CD4-positive, alpha-beta memory T cell (primary cell): ENCODE measurements at regions of chr2 and their contacts with region 1.

Region 1: GRCh38 chr2:32168513-32168912 is 2.8 kb downstream of the SLC30A6 start:
- DNase-seq: no peak
- H3K4me3 ChIP-seq: no peak overlapping the region
- H3K4me3 Mint-ChIP-seq: peak overlapping the region in 1 of 8 donors; percentile 33
- H3K27ac ChIP-seq: no peak overlapping the region
- H3K27ac Mint-ChIP-seq: peak overlapping the region in 1 of 7 donors; percentile 38
- H3K4me1 ChIP-seq: peaks cover 23% of the 10 kb centered on the region
- H3K4me1 Mint-ChIP-seq: peaks cover 30 to 56% (median 46%) of the 10 kb centered on the region in 4 donors
- H3K27me3 ChIP-seq: no peaks in the 10 kb centered on the region
- H3K27me3 Mint-ChIP-seq: no peaks in the 10 kb centered on the region

Region 2: DNA sequence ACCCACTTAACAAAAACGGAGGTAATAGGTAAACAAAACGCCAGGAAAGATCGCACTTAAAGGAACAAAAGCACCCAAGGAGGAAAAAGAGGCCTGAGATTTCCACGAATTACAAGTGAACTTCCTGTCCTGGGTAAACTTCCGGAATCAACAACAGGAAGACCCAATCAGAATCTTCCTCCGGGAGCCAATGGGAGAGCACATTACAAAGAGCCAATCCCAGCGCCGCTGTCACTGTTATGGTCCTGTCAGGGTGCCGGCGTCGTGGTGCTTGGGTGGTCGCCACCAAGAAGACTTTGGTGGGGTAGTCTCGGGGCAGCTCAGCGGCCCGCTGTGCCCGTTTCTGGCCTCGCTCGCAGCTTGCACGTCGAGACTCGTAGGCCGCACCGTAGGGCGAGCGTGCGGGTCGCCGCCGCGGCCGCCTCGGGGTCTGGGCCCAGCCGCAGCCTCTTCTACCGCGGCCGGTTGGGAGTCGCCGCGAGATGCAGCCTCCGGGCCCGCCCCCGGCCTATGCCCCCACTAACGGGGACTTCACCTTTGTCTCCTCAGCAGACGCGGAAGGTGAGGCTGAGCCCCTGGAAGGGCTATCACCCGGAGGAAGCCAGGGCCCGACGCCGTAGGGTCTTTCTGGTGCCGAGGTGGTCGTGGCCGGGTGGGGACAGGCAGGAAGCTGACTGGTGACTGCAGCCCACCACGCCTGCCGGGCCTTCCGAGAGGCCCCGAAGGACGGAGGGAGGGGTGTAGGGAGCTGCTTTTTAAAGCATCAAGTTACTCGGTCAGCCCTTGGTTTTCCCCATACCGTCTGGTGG is 109.4 kb after region 1 on chr2 and contains the start of gene YIPF4:
- CTCF ChIA-PET with region 1: no interaction called
- POLR2A ChIA-PET with region 1: interaction called, 6 read pairs
- intact Hi-C with region 1: loop called (anchors 1 kb)
- DNase-seq: peak; percentile 88 to 92 (median 90)
- H3K4me3 ChIP-seq: peak within 1 kb of the TSS; percentile 90 to 98
- H3K4me3 Mint-ChIP-seq: peak within 1 kb of the TSS; percentile 90 to 97 (median 96)
- H3K27ac ChIP-seq: peak within 1 kb of the TSS; percentile 72
- H3K27ac Mint-ChIP-seq: peak within 1 kb of the TSS; percentile 96 to 99 (median 97)
- H3K4me1 ChIP-seq: peaks cover 43% of the 10 kb centered on the region
- H3K4me1 Mint-ChIP-seq: peaks cover 11 to 45% (median 32%) of the 10 kb centered on the region in 4 donors
- H3K27me3 ChIP-seq: no peaks in the 10 kb centered on the region
- H3K27me3 Mint-ChIP-seq: peaks cover 0 to 1% of the 10 kb centered on the region in 2 donors
- total RNA-seq, gene YIPF4: 46.1 to 51.9 TPM